Activated CD4-positive, alpha-beta T cell treated with anti-CD3 and anti-CD28 coated beads for 36 hours (primary cell): ENCODE measurements at regions of chr17 and their contacts with region 1.

Region 1: DNA sequence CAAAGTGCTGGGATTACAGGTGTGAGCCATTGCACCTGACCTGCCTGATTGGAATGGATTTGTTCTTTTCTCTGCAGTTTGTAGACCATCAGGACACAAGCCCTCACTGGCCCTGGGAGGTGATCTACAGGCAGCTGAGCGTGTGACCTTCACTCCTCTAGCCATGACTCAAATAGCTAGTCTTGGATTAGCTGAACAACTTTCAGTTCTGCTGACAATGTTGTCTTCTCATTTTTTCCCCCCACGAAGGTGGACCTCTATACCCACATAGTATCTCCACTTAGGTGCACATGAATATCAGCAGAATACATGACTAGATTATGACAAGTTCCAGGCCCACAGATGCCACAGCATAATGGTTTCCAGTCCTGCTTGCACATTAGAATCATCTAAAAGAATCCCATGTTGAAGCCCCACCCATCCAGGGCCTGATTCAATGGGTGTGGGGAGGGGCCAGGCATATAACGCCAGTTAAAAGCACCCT is 36.8 kb downstream of the HS3ST3B1 start:
- DNase-seq: peak; percentile 83
- ATAC-seq: peak; percentile 93
- H3K4me3 Mint-ChIP-seq: no peak overlapping the region
- H3K27ac Mint-ChIP-seq: peak overlapping the region; percentile 76
- H3K4me1 Mint-ChIP-seq: peaks cover 83% of the 10 kb centered on the region
- H3K27me3 Mint-ChIP-seq: no peaks in the 10 kb centered on the region

Region 2: DNA sequence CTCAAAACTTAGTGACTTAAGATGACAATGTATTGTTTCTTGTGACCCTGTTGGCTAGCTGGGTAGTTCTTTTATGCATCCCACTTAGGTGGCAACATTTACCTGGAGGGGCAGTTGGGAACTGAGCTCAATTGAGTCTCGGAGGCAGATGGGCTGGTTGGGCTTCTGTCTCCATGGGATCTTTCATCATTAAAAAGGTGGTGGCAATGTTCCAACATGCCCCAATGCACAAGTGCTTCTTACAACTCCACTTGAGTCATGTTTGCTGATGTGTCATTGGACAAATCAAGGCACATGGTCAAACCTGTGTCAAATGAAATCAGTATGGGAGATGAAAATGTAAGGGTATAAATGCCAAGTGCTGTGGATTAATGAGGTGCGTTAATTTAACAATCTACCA is 48.5 kb before region 1 on chr17:
- CTCF ChIA-PET with region 1: no interaction called
- POLR2A ChIA-PET with region 1: no interaction called
- intact Hi-C with region 1: no loop called
- DNase-seq: no peak
- ATAC-seq: no peak
- H3K4me3 Mint-ChIP-seq: no peak overlapping the region
- H3K27ac Mint-ChIP-seq: no peak overlapping the region
- H3K4me1 Mint-ChIP-seq: no peaks in the 10 kb centered on the region
- H3K27me3 Mint-ChIP-seq: peaks cover 22% of the 10 kb centered on the region

Region 3: GRCh38 chr17:14308965-14309879 is 28.4 kb before region 1 on chr17:
- CTCF ChIA-PET with region 1: interaction called, 3 read pairs
- POLR2A ChIA-PET with region 1: no interaction called
- intact Hi-C with region 1: loop called (anchors 1 kb)
- DNase-seq: peak; percentile 95
- ATAC-seq: peak; percentile 99
- H3K4me3 Mint-ChIP-seq: peak overlapping the region; percentile 69
- H3K27ac Mint-ChIP-seq: peak overlapping the region; percentile 65
- H3K4me1 Mint-ChIP-seq: peaks cover 68% of the 10 kb centered on the region
- H3K27me3 Mint-ChIP-seq: no peaks in the 10 kb centered on the region

Region 4: DNA sequence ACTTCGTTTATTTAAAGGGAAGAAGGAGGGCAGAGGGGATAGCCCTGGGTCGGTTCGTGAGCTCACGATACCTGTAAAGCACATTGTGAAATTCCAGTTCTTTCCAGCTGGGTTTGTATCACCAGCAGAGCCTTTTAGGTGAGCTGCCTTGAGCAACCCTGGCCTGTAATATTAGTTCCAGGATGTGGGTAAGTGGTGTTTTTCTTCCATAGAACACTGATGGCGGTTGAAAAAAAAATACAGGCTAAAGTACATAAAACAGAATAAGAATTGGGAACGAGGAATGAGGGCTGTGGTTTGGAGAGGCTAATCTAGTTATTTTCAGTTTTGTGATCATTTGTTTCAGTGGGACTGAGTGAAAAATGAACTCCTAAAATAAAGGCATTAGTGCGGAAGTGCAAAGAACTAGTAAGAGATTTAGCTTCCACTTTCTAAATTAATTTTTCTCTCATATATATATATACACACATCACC is 16.1 kb before region 1 on chr17:
- CTCF ChIA-PET with region 1: interaction called, 5 read pairs
- POLR2A ChIA-PET with region 1: interaction called, 4 read pairs
- intact Hi-C with region 1: loop called in 1 of 2 experiments (anchors 1 kb)
- DNase-seq: no peak
- ATAC-seq: peak; percentile 38
- H3K4me3 Mint-ChIP-seq: no peak overlapping the region
- H3K27ac Mint-ChIP-seq: peak overlapping the region; percentile 58
- H3K4me1 Mint-ChIP-seq: peaks cover 72% of the 10 kb centered on the region
- H3K27me3 Mint-ChIP-seq: no peaks in the 10 kb centered on the region

Region 5: DNA sequence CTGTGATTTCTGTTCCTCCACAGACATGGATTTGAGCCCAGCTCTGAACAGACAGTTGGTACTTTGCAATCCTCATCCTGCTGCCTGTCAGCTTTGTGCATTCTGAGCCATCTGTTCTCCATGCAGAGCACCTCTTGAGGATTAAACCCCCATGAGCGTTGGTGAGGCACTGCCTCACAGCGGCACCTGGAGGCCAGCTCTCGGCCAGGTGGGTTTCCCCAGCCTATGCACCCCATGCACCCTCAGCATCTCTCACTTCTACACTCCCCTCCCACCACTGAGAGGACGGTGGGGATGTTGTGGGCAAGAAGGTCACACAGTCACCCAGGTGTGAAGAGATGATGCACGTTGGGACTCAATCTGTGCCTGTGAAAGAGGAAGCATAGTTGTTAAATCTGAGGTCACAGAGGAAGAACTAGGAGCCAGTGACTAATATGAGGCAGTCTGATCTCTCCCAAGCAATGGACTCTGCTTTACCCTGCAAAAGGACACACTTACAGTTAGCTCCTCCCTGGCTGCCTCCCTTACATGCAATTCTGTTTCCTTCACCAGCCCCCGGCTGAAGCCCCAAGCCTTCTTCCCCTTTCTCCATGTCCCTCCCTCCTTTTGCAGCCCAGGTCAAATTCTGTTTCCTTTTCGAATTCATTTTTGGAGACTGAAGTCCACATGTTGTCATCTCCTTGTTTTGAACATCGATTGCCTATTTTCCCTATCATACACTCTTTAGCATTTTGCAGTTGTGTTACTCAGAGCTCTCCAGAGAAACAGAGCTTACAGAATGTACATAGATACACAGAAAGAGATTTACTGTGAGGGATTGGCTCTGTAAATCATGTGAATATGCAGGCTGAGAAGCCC is 21.8 kb after region 1 on chr17:
- CTCF ChIA-PET with region 1: interaction called, 4 read pairs
- POLR2A ChIA-PET with region 1: no interaction called
- intact Hi-C with region 1: loop called in 1 of 2 experiments (anchors 1 kb)
- DNase-seq: peak; percentile 69
- ATAC-seq: peak; percentile 97
- H3K4me3 Mint-ChIP-seq: no peak overlapping the region
- H3K27ac Mint-ChIP-seq: no peak overlapping the region
- H3K4me1 Mint-ChIP-seq: peaks cover 12% of the 10 kb centered on the region
- H3K27me3 Mint-ChIP-seq: no peaks in the 10 kb centered on the region

Region 6: DNA sequence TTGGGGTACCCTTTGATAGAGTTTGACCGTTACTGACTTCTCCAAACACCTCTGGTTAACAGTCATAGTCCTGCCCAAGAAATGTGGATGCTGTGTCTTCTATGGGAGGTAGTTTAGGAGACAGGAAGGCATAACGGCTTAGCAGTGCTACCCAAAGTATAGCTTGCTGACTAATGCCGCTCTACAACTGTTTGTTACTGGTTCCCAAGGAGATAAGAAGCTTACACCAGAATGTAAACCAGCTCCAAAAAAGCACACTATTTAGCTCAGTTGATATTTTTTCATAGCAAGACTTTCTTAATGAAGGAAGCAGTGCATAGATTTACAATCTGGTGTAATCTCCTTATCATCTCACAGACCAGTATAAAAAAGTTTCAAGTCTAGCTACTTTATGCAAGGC is 58.9 kb after region 1 on chr17:
- CTCF ChIA-PET with region 1: no interaction called
- POLR2A ChIA-PET with region 1: no interaction called
- intact Hi-C with region 1: loop called in 1 of 2 experiments (anchors 5 kb)
- DNase-seq: no peak
- ATAC-seq: no peak
- H3K4me3 Mint-ChIP-seq: no peak overlapping the region
- H3K27ac Mint-ChIP-seq: no peak overlapping the region
- H3K4me1 Mint-ChIP-seq: peaks cover 5% of the 10 kb centered on the region
- H3K27me3 Mint-ChIP-seq: no peaks in the 10 kb centered on the region